ENCODE measurements at regions of chr14 and their contacts with region 1.

Region 1: GRCh38 chr14:96584199-96584906 is 82.2 kb downstream of the PAPOLA start:
- DNase-seq: peak in 1 of 2 donors; percentile 82
- H3K4me3 ChIP-seq: no peak overlapping the region
- H3K27ac ChIP-seq: no peak overlapping the region
- H3K4me1 ChIP-seq: no peaks in the 10 kb centered on the region
- H3K27me3 ChIP-seq: peaks cover 0 to 67% (median 35%) of the 10 kb centered on the region in 3 donors
- CTCF ChIP-seq: peak in 2 of 7 experiments; percentile 17 to 27
- EP300 ChIP-seq: no peak
- POLR2A ChIP-seq: no peak

Region 2: DNA sequence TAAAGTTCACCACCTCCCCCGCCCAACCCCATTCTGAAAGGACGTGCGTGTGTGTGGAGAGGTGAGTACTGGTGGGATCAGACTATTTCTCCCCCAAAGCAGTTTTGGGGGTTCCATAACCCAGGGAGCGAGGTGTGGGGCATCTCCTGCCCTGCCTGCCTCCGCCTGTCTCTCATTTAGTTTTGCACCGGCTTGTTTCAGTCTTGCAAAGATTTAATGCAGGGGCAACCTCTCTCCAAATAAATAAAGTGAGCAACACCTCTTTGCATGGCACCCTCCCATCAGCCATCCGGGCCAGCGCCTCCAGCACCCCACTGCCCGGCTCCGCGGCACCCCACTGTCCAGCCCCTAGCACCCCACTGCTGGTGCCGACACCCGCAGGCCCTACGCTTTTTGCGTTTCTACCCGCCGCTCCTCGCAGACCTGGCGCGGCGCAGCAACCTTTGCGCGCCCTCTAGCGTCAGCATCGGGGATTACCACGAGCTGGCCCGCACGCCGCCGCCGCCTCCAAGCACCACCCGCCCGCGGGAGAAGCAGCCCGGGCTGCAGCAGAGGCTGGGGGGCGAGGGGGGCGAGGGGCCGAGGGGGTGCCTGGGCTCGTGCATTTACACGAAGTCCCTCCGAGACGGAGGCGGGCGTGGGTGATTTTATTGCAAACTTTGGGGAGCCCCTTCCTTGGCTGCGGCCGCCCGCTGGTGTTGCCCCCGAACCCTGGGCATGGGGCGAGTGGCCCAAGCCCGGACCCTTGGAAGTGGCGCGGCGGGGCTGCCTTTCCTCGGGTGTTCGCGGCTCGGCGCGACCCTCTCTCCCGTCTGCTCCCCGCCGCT is 157.0 kb after region 1 on chr14:
- intact Hi-C with region 1: loop called (anchors 10 kb)
- DNase-seq: peak; percentile 68 to 86
- H3K4me3 ChIP-seq: peak overlapping the region; percentile 33 to 53 (median 39)
- H3K27ac ChIP-seq: no peak overlapping the region
- H3K4me1 ChIP-seq: peaks cover 8 to 14% (median 11%) of the 10 kb centered on the region in 4 donors
- H3K27me3 ChIP-seq: peaks cover 0 to 95% (median 53%) of the 10 kb centered on the region in 3 donors
- CTCF ChIP-seq: peak in 5 of 7 experiments; percentile 55 to 90 (median 81)
- EP300 ChIP-seq: no peak
- POLR2A ChIP-seq: no peak

Measured in stomach (tissue), 19 donors.